Endothelial cell of umbilical vein (primary cell): ENCODE measurements at regions of chr6 and their contacts with region 1.

Region 1: GRCh38 chr6:44265007-44265721 is at the start of gene NFKBIE:
- DNase-seq: peak; percentile 92
- H3K4me3 ChIP-seq: peak within 1 kb of the TSS; percentile 37 to 78 (median 63)
- H3K27ac ChIP-seq: peak within 1 kb of the TSS; percentile 76
- H3K4me1 ChIP-seq: peaks cover 36% of the 10 kb centered on the region
- H3K27me3 ChIP-seq: peaks cover 11 to 19% of the 10 kb centered on the region in 2 experiments
- CTCF ChIP-seq: peak; percentile 26 to 46
- POLR2A ChIP-seq: peak; percentile 92
- total RNA-seq, gene NFKBIE: 15.6 and 19.0 TPM in 2 replicates

Region 2: DNA sequence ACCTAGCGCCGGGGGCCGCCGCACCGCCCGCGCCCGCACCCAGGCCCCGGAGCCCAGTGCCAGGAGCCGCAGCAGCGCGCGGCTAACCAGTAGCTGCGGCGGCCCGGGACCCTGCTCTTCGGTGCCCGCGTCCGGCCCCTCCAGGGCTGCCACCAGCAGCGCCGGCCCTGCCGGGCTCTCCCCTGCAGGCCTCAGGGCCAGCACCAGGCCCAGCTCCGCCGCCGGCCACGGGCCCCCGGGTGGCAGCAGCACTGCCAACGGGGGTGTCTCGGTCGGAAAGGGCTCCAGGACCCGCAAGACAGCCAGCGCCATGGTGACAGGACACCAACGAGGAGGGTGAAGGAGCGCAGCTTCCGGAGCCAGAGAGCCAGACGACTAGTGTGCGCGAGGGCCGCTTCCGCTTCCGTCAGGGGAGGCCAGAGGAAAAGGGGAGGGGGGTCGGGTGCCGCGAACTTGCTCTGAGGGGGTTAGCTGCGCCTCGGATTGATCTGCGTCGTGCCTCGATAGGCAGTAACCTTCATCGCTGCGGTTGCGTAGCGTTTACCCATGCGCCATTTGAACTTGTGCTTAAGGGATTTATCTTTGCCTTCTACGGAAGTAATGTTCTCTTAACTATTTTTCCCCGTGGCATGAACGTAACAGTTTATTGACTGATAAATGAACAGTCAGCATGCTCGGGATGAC is 1286.2 kb before region 1 on chr6 and contains the start of gene PEX6:
- CTCF ChIA-PET with region 1: no interaction called
- POLR2A ChIA-PET with region 1: no interaction called
- dilution Hi-C with region 1: no loop called
- intact Hi-C with region 1: no loop called
- DNase-seq: peak; percentile 83
- H3K4me3 ChIP-seq: peak within 1 kb of the TSS; percentile 62 to 74 (median 72)
- H3K27ac ChIP-seq: peak within 1 kb of the TSS; percentile 58
- H3K4me1 ChIP-seq: peaks cover 28% of the 10 kb centered on the region
- H3K27me3 ChIP-seq: no peaks in the 10 kb centered on the region
- CTCF ChIP-seq: no peak
- POLR2A ChIP-seq: peak; percentile 83
- total RNA-seq, gene PEX6: 9.9 and 18.1 TPM in 2 replicates

Region 3: DNA sequence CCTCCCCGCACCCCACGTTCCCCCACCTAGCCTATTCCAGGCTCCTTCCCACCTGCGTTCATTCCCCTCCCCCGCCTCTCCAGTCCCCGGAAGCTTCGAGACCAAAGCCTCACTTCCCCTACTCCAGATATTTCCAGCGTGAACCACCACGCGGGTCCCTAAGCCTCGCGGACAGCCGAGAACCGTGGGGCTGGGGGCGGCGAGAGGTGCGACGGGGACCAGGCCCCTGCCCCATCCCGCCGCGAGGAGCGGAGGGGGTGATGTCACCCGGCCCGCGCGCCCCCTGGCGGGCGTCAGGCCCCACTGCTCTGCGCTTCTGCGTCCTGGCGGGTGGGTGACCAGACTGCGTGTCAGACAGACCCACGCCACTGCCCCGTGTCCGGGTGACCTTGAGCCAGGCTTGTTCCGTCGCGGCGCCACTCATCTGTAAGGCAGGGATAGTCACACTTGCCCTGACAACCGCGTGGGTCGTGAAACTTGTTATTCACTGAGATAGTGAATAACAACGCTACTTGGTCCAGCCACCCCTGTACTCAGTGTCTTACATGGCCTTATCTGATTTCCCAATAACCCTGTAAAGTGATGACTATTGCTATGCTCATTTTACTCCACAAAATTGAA is 27.2 kb before region 1 on chr6:
- CTCF ChIA-PET with region 1: interaction called, 4 read pairs
- POLR2A ChIA-PET with region 1: no interaction called
- dilution Hi-C with region 1: no loop called
- intact Hi-C with region 1: loop called (anchors 1 kb)
- DNase-seq: peak; percentile 67
- H3K4me3 ChIP-seq: peak overlapping the region in 1 of 3 experiments; percentile 35
- H3K27ac ChIP-seq: peak overlapping the region; percentile 70
- H3K4me1 ChIP-seq: peaks cover 41% of the 10 kb centered on the region
- H3K27me3 ChIP-seq: no peaks in the 10 kb centered on the region
- CTCF ChIP-seq: peak; percentile 99
- POLR2A ChIP-seq: peak; percentile 13

Region 4: GRCh38 chr6:44285552-44286284 is 20.6 kb after region 1 on chr6:
- CTCF ChIA-PET with region 1: interaction called, 11 read pairs
- POLR2A ChIA-PET with region 1: interaction called, 3 read pairs
- dilution Hi-C with region 1: no loop called
- intact Hi-C with region 1: no loop called
- DNase-seq: no peak
- H3K4me3 ChIP-seq: no peak overlapping the region
- H3K27ac ChIP-seq: no peak overlapping the region
- H3K4me1 ChIP-seq: no peaks in the 10 kb centered on the region
- H3K27me3 ChIP-seq: peaks cover 5 to 6% of the 10 kb centered on the region in 2 experiments
- CTCF ChIP-seq: no peak
- POLR2A ChIP-seq: no peak

Region 5: DNA sequence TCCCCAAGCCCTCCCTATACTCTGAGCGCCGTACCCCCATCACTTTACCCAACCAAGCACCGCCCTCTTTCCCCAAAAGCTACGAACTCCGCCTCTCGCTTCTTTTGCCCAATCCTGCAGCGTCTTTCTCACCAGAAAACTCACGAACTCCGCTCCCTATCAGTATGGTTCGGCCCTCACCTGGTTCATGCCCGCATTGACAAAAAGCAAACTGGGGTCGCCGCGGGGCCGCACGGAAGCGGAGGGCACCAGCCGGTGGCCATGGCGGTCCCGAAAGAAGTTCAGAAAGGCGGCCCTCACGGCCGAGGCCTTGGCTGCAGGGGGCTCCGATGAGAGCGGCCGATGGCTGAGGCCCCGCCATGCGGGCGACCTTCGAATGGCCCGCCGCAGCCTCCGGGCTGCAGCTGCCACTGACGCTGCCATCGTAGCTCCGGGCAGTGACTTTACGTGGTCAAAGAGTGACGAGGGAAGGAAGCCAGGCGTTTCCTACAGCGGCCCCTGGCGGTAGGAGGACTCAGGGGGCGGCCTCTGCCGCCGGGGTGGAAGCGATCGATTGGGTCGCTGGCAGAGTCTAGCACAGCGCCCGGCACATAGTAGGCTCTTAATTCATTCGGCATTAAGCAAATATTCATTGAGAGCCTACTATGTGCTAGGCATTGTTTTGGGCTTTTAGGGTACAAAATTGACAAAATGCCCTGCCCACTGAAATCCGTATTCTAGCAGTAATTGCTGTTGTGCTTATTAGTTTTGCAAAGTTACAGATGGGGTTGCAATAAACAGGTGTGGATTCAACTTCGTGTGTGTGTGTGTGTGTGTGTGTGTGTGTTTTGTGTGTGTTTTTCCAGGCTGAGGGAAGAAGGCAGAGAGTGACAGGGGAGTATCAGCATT is 48.0 kb after region 1 on chr6 and contains the start of gene AARS2:
- CTCF ChIA-PET with region 1: interaction called, 23 read pairs
- POLR2A ChIA-PET with region 1: no interaction called
- dilution Hi-C with region 1: no loop called
- intact Hi-C with region 1: no loop called
- DNase-seq: peak; percentile 85
- H3K4me3 ChIP-seq: peak within 1 kb of the TSS; percentile 87 to 97 (median 92)
- H3K27ac ChIP-seq: peak within 1 kb of the TSS; percentile 49
- H3K4me1 ChIP-seq: peaks cover 7% of the 10 kb centered on the region
- H3K27me3 ChIP-seq: peaks cover 5 to 6% of the 10 kb centered on the region in 2 experiments
- CTCF ChIP-seq: peak; percentile 99
- POLR2A ChIP-seq: peak; percentile 83
- total RNA-seq, gene AARS2: 17.9 and 18.0 TPM in 2 replicates

Region 6: GRCh38 chr6:44387346-44388133 is 122.4 kb after region 1 on chr6 and contains the start of gene CDC5L:
- CTCF ChIA-PET with region 1: interaction called, 3 read pairs
- POLR2A ChIA-PET with region 1: no interaction called
- dilution Hi-C with region 1: no loop called
- intact Hi-C with region 1: loop called (anchors 1 kb)
- DNase-seq: peak; percentile 100
- H3K4me3 ChIP-seq: peak within 1 kb of the TSS; percentile 72 to 87 (median 79)
- H3K27ac ChIP-seq: peak within 1 kb of the TSS; percentile 88
- H3K4me1 ChIP-seq: peaks cover 22% of the 10 kb centered on the region
- H3K27me3 ChIP-seq: no peaks in the 10 kb centered on the region
- CTCF ChIP-seq: no peak
- POLR2A ChIP-seq: peak; percentile 66
- total RNA-seq, gene CDC5L: 23.5 and 24.6 TPM in 2 replicates

Region 7: GRCh38 chr6:44762496-44762895 is 497.3 kb after region 1 on chr6:
- CTCF ChIA-PET with region 1: no interaction called
- POLR2A ChIA-PET with region 1: no interaction called
- dilution Hi-C with region 1: no loop called
- intact Hi-C with region 1: no loop called
- DNase-seq: no peak
- H3K4me3 ChIP-seq: no peak overlapping the region
- H3K27ac ChIP-seq: no peak overlapping the region
- H3K4me1 ChIP-seq: no peaks in the 10 kb centered on the region
- H3K27me3 ChIP-seq: no peaks in the 10 kb centered on the region
- CTCF ChIP-seq: no peak
- POLR2A ChIP-seq: no peak